Activated CD8-positive, alpha-beta memory T cell treated with anti-CD3 and anti-CD28 coated beads, Interleukin-2, amount 10 ng/mL, durations not matched to agents 7 days and 5 days (primary cell): ENCODE measurements at regions of chr6 and their contacts with region 1.

Region 1: GRCh38 chr6:73129653-73130443 is 95.4 kb downstream of the KHDC1L start:
- DNase-seq: peak; percentile 86
- ATAC-seq: peak; percentile 94
- H3K4me3 Mint-ChIP-seq: no peak overlapping the region
- H3K27ac Mint-ChIP-seq: no peak overlapping the region
- H3K4me1 Mint-ChIP-seq: peaks cover 4% of the 10 kb centered on the region
- H3K27me3 Mint-ChIP-seq: peaks cover 13% of the 10 kb centered on the region

Region 2: DNA sequence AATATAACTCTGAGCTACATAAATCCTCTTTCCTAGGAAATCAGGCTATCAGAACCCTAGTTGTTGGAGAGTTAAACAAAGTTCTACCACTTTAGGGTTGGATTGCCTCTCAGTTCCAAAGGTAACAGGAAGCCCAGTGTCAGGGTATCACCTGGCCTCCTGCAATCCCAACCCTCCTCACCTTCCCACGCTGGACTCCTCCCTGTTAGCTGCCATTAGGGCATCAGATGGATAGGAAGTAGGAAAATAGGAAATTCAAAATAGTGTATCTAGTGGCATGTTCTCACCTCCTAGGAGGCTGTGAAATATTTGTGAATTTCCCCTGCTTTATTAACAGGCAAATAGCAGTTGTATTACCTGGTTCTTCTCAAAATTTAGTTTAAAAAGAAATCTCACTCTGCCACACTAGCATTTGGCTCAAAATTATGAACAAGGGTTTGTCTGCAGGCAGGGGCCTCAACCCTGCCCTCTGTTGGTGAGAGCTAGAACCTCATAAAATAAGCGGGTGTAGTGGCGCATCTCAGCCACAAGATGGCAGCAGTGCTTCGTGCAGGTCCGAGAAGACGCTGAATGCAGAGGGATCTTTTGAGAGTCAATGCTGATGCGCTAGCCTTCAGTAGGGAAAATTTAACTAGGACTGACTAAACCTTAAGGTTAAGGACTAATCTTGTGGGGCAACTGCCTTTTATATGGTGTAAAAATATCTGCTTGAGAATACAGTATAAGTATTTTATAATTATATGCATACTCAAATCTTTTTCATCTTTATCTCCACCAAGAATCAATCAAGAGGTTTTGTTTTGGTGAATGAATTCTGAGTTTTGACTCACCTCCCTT is 717.8 kb before region 1 on chr6:
- CTCF ChIA-PET with region 1: interaction called, 64 read pairs
- DNase-seq: peak; percentile 75
- ATAC-seq: peak; percentile 76
- H3K4me3 Mint-ChIP-seq: no peak overlapping the region
- H3K27ac Mint-ChIP-seq: no peak overlapping the region
- H3K4me1 Mint-ChIP-seq: no peaks in the 10 kb centered on the region
- H3K27me3 Mint-ChIP-seq: peaks cover 30% of the 10 kb centered on the region

Region 3: GRCh38 chr6:72616406-72617015 is 513.3 kb before region 1 on chr6:
- CTCF ChIA-PET with region 1: interaction called, 77 read pairs
- DNase-seq: no peak
- ATAC-seq: no peak
- H3K4me3 Mint-ChIP-seq: no peak overlapping the region
- H3K27ac Mint-ChIP-seq: no peak overlapping the region
- H3K4me1 Mint-ChIP-seq: peaks cover 29% of the 10 kb centered on the region
- H3K27me3 Mint-ChIP-seq: peaks cover 18% of the 10 kb centered on the region

Region 4: GRCh38 chr6:72622094-72622940 is 507.5 kb before region 1 on chr6:
- CTCF ChIA-PET with region 1: interaction called, 77 read pairs
- DNase-seq: peak; percentile 58
- ATAC-seq: peak; percentile 48
- H3K4me3 Mint-ChIP-seq: peak overlapping the region; percentile 82
- H3K27ac Mint-ChIP-seq: peak overlapping the region; percentile 88
- H3K4me1 Mint-ChIP-seq: peaks cover 59% of the 10 kb centered on the region
- H3K27me3 Mint-ChIP-seq: peaks cover 29% of the 10 kb centered on the region

Region 5: GRCh38 chr6:73109659-73110058 is 20.2 kb before region 1 on chr6:
- CTCF ChIA-PET with region 1: no interaction called
- DNase-seq: no peak
- ATAC-seq: no peak
- H3K4me3 Mint-ChIP-seq: no peak overlapping the region
- H3K27ac Mint-ChIP-seq: no peak overlapping the region
- H3K4me1 Mint-ChIP-seq: no peaks in the 10 kb centered on the region
- H3K27me3 Mint-ChIP-seq: no peaks in the 10 kb centered on the region

Region 6: DNA sequence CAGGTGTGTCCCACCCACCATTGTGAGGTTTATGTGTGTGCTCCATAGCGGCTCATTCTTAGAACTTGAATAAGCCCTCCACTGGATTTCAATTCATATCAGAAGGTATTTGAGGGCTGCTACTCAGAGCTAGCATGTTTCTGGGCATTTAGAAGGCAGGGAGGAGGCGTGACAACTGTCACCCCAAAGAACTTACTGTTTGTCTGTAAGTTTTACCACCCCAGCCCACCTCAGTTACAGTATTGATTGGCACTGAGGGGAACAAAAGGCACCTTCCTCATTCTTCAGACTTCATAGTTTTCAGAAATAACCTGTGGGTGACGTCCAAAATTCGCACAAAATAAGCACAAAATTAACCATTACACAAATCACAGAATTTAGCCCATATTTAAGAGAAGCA is 13.7 kb after region 1 on chr6:
- CTCF ChIA-PET with region 1: interaction called, 18 read pairs
- DNase-seq: no peak
- ATAC-seq: no peak
- H3K4me3 Mint-ChIP-seq: no peak overlapping the region
- H3K27ac Mint-ChIP-seq: no peak overlapping the region
- H3K4me1 Mint-ChIP-seq: peaks cover 8% of the 10 kb centered on the region
- H3K27me3 Mint-ChIP-seq: no peaks in the 10 kb centered on the region

Region 7: DNA sequence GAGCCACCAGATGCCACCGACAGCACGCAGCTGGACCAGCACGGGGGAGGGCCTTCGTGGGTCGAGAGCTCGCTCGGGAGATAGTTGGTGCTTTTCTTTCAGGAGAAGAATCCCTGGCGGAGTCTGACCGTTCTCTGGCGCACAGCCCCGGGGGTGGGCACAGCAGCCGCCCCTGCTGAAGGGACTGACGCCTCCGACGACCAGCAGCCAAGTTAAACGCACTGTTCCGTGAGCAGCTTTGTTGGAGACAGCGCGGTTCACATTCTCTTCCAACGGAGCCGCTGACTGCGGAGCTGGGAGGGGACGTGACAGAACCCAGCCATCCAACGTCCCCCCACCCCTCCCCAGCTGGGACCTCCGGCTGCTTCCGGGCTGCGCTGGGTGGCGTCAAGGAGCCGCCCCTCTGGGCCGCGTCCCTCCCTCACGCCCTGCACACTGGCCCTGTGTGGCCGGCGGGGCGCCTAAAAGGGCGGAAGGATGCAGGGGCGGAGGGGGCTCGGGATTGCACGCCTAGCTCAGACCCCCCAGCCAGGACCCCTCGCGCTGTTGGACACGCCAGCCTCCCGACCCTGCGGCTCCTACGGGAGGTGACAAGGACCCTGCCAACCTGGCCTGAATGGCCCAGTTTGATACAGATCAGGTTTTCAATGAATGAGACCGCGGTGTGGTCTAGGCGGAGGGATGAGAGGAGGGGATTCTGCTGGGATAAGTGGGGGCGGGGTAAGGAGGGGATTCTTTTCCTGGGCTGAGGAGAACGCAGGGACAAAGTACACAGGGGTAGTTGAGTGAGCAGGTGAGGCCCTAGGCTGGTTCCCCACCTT is 169.5 kb after region 1 on chr6:
- CTCF ChIA-PET with region 1: no interaction called
- DNase-seq: no peak
- ATAC-seq: no peak
- H3K4me3 Mint-ChIP-seq: no peak overlapping the region
- H3K27ac Mint-ChIP-seq: no peak overlapping the region
- H3K4me1 Mint-ChIP-seq: peaks cover 4% of the 10 kb centered on the region
- H3K27me3 Mint-ChIP-seq: no peaks in the 10 kb centered on the region